ENCODE measurements at regions of chr12 and their contacts with region 1.

Region 1: DNA sequence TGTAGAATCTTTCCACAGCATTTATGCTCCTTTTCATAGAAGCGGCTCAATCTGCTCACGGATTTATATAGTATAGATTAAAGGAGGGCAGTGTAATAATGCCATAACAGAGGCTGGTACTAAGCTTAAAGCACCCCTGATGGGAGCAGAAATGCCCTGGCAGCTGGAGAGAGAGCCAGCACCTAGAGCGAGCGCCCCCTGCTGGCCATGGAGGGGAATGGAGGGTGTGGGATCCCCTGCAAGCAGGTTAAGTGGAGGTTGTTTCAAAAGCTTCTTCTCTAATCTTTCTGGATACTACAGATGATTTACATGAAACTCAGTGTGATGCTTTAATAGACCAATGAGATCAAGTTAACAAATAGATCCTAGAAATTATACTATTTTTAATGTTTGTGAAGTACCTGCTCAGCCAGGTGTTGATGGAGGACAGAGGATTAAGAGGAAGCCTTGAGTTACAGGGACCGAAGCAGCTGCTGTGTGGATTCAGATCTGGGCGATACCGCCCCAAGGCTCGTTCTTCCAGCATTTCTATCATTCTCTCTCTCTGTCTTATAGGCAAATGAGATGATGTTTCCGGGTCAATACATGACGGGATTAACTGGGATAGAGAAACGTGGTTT is 1519.3 kb upstream of the TMEM132C start:
- DNase-seq: peak; percentile 70
- H3K4me3 Mint-ChIP-seq: no peak overlapping the region
- H3K27ac Mint-ChIP-seq: no peak overlapping the region
- H3K4me1 Mint-ChIP-seq: no peaks in the 10 kb centered on the region
- H3K27me3 Mint-ChIP-seq: no peaks in the 10 kb centered on the region
- CTCF ChIP-seq: peak; percentile 94

Region 2: GRCh38 chr12:125183187-125184067 is 1564.2 kb before region 1 on chr12:
- CTCF ChIA-PET with region 1: interaction called, 3 read pairs
- POLR2A ChIA-PET with region 1: no interaction called
- intact Hi-C with region 1: loop called (anchors 5 kb)
- DNase-seq: peak; percentile 66
- H3K4me3 Mint-ChIP-seq: no peak overlapping the region
- H3K27ac Mint-ChIP-seq: no peak overlapping the region
- H3K4me1 Mint-ChIP-seq: peaks cover 5% of the 10 kb centered on the region
- H3K27me3 Mint-ChIP-seq: peaks cover 49% of the 10 kb centered on the region
- CTCF ChIP-seq: peak; percentile 99

Region 3: DNA sequence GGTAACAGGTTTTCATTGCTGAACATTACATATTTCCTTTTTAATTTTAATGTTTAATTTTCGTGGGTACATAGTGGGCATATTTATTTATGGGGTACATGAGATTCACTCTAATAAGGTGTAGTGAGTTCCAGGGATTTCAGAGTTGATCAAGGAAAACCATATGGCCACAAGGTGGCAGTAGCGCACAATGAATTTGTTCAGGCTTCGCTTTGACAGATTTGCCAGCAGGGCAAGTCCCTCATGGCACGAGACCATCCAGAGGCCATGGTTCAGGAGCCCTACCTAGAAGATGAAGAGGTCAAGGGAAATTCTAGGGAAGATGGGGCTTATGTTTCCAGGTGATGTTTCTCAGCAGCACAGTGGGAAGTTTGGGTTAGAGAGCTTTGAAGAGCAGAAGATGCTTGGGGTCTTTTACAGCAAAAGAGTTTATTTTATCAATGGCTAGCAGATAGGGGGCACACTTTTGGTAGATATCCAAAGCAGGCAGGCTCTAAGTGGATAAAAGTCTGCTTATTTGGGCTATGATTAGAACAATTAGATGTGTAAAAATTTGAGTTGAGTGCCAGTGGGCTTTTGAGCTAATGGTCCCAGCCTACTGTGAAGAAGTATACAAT is 678.0 kb before region 1 on chr12:
- CTCF ChIA-PET with region 1: interaction called, 19 read pairs
- POLR2A ChIA-PET with region 1: no interaction called
- intact Hi-C with region 1: loop called (anchors 1 kb)
- DNase-seq: peak; percentile 82
- H3K4me3 Mint-ChIP-seq: no peak overlapping the region
- H3K27ac Mint-ChIP-seq: peak overlapping the region; percentile 8
- H3K4me1 Mint-ChIP-seq: no peaks in the 10 kb centered on the region
- H3K27me3 Mint-ChIP-seq: no peaks in the 10 kb centered on the region
- CTCF ChIP-seq: peak; percentile 74

Region 4: DNA sequence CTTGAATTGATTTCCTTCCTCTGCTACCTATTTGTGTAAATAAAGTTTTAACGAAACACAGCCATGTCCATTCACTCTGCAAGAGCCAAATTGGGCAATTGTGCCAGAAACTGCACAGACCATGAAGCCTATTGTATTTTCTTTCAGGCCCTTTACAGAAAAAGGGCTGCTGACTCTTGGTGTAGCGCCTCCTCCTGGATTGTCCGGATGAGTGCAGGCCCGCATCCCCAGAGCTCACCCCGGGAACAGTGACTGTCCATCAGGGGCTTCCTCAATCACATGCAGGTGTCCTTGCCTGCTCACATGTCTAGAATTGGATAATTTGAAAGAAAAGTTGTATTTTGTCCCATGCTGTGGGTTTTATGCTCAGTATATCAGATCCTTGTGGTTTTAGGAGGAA is 400.2 kb before region 1 on chr12:
- CTCF ChIA-PET with region 1: no interaction called
- POLR2A ChIA-PET with region 1: no interaction called
- intact Hi-C with region 1: loop called (anchors 2 kb)
- DNase-seq: no peak
- H3K4me3 Mint-ChIP-seq: no peak overlapping the region
- H3K27ac Mint-ChIP-seq: no peak overlapping the region
- H3K4me1 Mint-ChIP-seq: no peaks in the 10 kb centered on the region
- H3K27me3 Mint-ChIP-seq: no peaks in the 10 kb centered on the region
- CTCF ChIP-seq: peak; percentile 17

Region 5: DNA sequence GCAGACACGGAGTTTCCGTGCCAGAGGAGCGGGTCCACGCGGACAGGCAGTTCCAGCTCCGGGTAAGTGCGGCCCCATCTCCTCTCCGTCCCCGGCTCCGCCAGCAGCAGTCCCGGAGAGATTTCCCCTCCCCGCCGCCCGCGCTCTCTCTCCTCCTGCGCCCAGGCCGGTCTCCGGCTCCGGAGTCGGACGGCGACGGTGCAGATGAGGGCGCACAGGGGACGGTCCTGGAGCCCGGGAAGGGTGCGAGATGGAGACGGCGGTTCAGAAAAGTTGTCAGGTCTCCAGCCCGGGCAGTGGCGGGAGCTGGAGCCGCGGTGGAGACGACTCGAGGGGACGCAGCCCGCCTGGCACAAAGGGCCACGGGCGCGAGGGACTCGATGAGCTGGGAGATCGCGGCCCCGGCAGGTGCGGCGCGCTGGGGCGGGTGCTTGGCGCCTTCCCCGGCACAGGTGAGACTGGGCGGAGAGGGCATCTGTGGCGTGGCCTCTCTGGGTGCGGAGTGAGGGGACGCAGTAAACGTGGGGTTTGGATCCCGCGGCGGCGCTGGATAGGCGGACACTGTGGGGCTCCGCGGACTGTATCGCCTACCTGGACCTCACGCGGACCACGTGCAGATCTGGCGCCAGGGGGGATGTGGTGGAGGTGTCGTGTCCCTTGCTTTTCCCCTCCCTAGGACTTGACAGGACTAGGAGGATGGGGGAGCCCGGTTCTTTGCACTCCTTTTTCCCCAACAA is 21.0 kb before region 1 on chr12:
- CTCF ChIA-PET with region 1: interaction called, 13 read pairs
- POLR2A ChIA-PET with region 1: no interaction called
- intact Hi-C with region 1: no loop called
- DNase-seq: no peak
- H3K4me3 Mint-ChIP-seq: no peak overlapping the region
- H3K27ac Mint-ChIP-seq: no peak overlapping the region
- H3K4me1 Mint-ChIP-seq: no peaks in the 10 kb centered on the region
- H3K27me3 Mint-ChIP-seq: no peaks in the 10 kb centered on the region
- CTCF ChIP-seq: no peak

Region 6: GRCh38 chr12:126768517-126768916 is 20.9 kb after region 1 on chr12:
- CTCF ChIA-PET with region 1: interaction called, 13 read pairs
- POLR2A ChIA-PET with region 1: no interaction called
- intact Hi-C with region 1: no loop called
- DNase-seq: no peak
- H3K4me3 Mint-ChIP-seq: no peak overlapping the region
- H3K27ac Mint-ChIP-seq: no peak overlapping the region
- H3K4me1 Mint-ChIP-seq: no peaks in the 10 kb centered on the region
- H3K27me3 Mint-ChIP-seq: no peaks in the 10 kb centered on the region
- CTCF ChIP-seq: no peak

Measured in MCF 10A (cell line).